ENCODE measurements at regions of chr21 and their contacts with region 1.

Region 1: GRCh38 chr21:32940079-32941014 is 85.4 kb upstream of the OLIG2 start:
- DNase-seq: peak in 8 of 9 experiments; percentile 15 to 75 (median 44)
- ATAC-seq: peak; percentile 54
- H3K4me3 ChIP-seq: no peak overlapping the region
- H3K4me3 Mint-ChIP-seq: no peak overlapping the region
- H3K27ac ChIP-seq: no peak overlapping the region
- H3K27ac Mint-ChIP-seq: no peak overlapping the region
- H3K4me1 ChIP-seq: no peaks in the 10 kb centered on the region
- H3K4me1 Mint-ChIP-seq: peaks cover 3% of the 10 kb centered on the region
- H3K27me3 ChIP-seq: no peaks in the 10 kb centered on the region
- H3K27me3 Mint-ChIP-seq: no peaks in the 10 kb centered on the region
- CTCF ChIP-seq: peak; percentile 74

Region 2: DNA sequence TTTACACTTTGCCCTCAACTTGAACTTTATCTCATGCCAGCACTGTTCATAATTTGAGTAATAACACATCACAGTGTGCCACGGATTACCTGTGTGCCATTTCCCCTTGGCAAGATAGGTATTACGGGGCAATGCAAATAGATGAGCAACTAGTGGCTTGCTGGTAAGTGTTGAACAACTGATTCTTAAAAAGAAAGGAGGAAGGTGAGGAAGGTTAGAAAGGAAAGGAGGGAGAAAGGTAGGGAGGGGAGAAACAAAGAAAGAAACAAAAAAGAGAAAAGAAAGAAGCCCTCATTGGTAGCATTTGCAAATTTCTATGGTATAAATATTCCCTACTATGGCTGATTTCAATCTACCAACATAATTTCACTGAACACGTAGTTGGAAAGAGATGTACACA is 32.8 kb before region 1 on chr21:
- CTCF ChIA-PET with region 1: interaction called, 12 read pairs
- POLR2A ChIA-PET with region 1: no interaction called
- intact Hi-C with region 1: no loop called
- DNase-seq: no peak
- ATAC-seq: no peak
- H3K4me3 ChIP-seq: no peak overlapping the region
- H3K4me3 Mint-ChIP-seq: no peak overlapping the region
- H3K27ac ChIP-seq: no peak overlapping the region
- H3K27ac Mint-ChIP-seq: no peak overlapping the region
- H3K4me1 ChIP-seq: no peaks in the 10 kb centered on the region
- H3K4me1 Mint-ChIP-seq: no peaks in the 10 kb centered on the region
- H3K27me3 ChIP-seq: no peaks in the 10 kb centered on the region
- H3K27me3 Mint-ChIP-seq: no peaks in the 10 kb centered on the region
- CTCF ChIP-seq: no peak

Region 3: DNA sequence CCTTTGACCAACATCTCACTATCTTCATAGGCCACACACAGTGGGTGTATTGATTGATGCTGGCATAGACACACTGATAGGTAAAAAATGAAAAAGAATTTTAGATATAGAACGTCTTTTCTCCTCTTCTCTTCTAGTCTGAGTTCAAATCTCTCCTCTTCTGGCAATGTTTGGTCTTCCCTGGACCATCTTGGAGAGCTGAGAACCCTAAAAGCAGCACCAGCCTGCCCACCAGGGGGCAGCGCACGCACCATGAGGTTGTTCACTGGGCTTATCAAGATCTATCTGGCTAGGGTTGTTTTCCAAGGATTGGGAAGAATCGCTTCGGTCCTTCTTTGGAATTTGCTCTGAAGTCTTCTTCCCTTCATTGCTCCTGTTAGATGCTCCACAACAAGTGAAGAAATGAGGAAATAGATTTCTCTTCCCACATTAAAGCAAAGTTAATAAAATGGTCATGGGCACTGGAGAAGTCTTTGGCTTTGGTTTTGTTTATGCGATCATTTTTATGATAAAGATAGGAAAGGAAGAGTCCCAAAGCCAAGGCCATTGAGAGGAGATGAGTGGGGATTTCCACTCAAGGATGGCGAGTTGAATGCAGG is 18.6 kb before region 1 on chr21:
- CTCF ChIA-PET with region 1: interaction called, 20 read pairs
- POLR2A ChIA-PET with region 1: no interaction called
- intact Hi-C with region 1: no loop called
- DNase-seq: peak in 8 of 9 experiments; percentile 26 to 65 (median 45)
- ATAC-seq: no peak
- H3K4me3 ChIP-seq: no peak overlapping the region
- H3K4me3 Mint-ChIP-seq: no peak overlapping the region
- H3K27ac ChIP-seq: no peak overlapping the region
- H3K27ac Mint-ChIP-seq: no peak overlapping the region
- H3K4me1 ChIP-seq: no peaks in the 10 kb centered on the region
- H3K4me1 Mint-ChIP-seq: peaks cover 9% of the 10 kb centered on the region
- H3K27me3 ChIP-seq: no peaks in the 10 kb centered on the region
- H3K27me3 Mint-ChIP-seq: no peaks in the 10 kb centered on the region
- CTCF ChIP-seq: peak; percentile 55

Region 4: GRCh38 chr21:32958288-32959002 is 18.1 kb after region 1 on chr21:
- CTCF ChIA-PET with region 1: interaction called, 17 read pairs
- POLR2A ChIA-PET with region 1: no interaction called
- intact Hi-C with region 1: no loop called
- DNase-seq: no peak
- ATAC-seq: no peak
- H3K4me3 ChIP-seq: no peak overlapping the region
- H3K4me3 Mint-ChIP-seq: no peak overlapping the region
- H3K27ac ChIP-seq: no peak overlapping the region
- H3K27ac Mint-ChIP-seq: no peak overlapping the region
- H3K4me1 ChIP-seq: no peaks in the 10 kb centered on the region
- H3K4me1 Mint-ChIP-seq: no peaks in the 10 kb centered on the region
- H3K27me3 ChIP-seq: peaks cover 0 to 2% of the 10 kb centered on the region in 2 experiments
- H3K27me3 Mint-ChIP-seq: peaks cover 47% of the 10 kb centered on the region
- CTCF ChIP-seq: no peak

Region 5: GRCh38 chr21:33374450-33375096 is 434.2 kb after region 1 on chr21:
- CTCF ChIA-PET with region 1: interaction called, 4 read pairs
- POLR2A ChIA-PET with region 1: no interaction called
- intact Hi-C with region 1: loop called in 1 of 2 experiments (anchors 2 kb)
- DNase-seq: peak in 7 of 9 experiments; percentile 38 to 75 (median 67)
- ATAC-seq: peak; percentile 85
- H3K4me3 ChIP-seq: no peak overlapping the region
- H3K4me3 Mint-ChIP-seq: no peak overlapping the region
- H3K27ac ChIP-seq: no peak overlapping the region
- H3K27ac Mint-ChIP-seq: no peak overlapping the region
- H3K4me1 ChIP-seq: peaks cover 9% of the 10 kb centered on the region
- H3K4me1 Mint-ChIP-seq: peaks cover 12% of the 10 kb centered on the region
- H3K27me3 ChIP-seq: peaks cover 0 to 13% of the 10 kb centered on the region in 2 experiments
- H3K27me3 Mint-ChIP-seq: peaks cover 3% of the 10 kb centered on the region
- CTCF ChIP-seq: peak; percentile 66

Region 6: DNA sequence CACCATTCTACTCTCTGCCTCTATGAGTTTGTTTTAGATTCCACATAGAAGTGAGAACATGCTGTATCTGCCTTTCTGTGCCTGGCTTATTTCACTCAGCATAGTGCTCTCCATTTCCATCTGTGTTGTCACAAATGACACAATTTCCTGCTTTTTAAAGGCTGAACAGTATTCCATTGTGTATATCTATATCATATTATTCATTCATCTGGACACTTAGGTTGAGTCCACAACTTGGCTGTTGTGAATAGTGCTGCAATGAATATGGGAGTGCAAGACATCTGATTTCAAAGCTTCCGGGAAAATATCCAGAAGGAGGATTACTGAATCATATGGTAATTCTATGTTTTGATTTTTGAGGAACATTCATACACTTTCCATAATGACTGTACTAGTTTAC is 668.2 kb after region 1 on chr21:
- CTCF ChIA-PET with region 1: no interaction called
- POLR2A ChIA-PET with region 1: no interaction called
- intact Hi-C with region 1: loop called in 1 of 2 experiments (anchors 10 kb)
- DNase-seq: no peak
- ATAC-seq: no peak
- H3K4me3 ChIP-seq: no peak overlapping the region
- H3K4me3 Mint-ChIP-seq: no peak overlapping the region
- H3K27ac ChIP-seq: no peak overlapping the region
- H3K27ac Mint-ChIP-seq: no peak overlapping the region
- H3K4me1 ChIP-seq: no peaks in the 10 kb centered on the region
- H3K4me1 Mint-ChIP-seq: peaks cover 3% of the 10 kb centered on the region
- H3K27me3 ChIP-seq: no peaks in the 10 kb centered on the region
- H3K27me3 Mint-ChIP-seq: no peaks in the 10 kb centered on the region
- CTCF ChIP-seq: no peak